HAP-1 (cell line): ENCODE measurements at regions of chr18 and their contacts with region 1.

Region 1: GRCh38 chr18:49238433-49239042 is 221.9 kb downstream of the DYM start:
- DNase-seq: peak; percentile 50 to 51
- H3K4me3 ChIP-seq: no peak overlapping the region
- H3K4me1 ChIP-seq: no peaks in the 10 kb centered on the region
- H3K27me3 ChIP-seq: no peaks in the 10 kb centered on the region

Region 2: DNA sequence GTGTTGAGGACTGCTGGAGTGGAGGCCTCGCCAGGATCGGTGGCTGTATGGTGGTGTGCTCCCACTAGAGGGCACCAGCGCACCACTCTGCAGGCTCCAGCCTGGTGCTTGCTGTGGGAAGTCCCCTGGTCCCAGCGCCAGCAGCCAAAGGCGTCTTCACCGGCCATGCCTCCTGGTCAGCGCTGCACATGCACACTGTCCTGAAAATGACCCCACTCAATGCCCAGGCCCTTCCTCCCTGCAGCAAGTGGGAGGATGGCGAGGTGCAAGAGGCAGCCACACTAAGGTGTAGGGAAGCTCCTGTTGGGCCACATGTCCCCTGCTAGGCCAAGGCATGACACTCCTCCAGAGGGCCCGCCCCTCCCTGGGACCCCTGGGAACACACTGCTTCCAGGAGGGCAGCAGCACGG is 563.2 kb before region 1 on chr18:
- in situ Hi-C with region 1: loop called (anchors 10 kb)
- DNase-seq: peak; percentile 57 to 89
- H3K4me3 ChIP-seq: no peak overlapping the region
- H3K4me1 ChIP-seq: peaks cover 3% of the 10 kb centered on the region; the same call in 1 of the 2 replicates
- H3K27me3 ChIP-seq: no peaks in the 10 kb centered on the region

Region 3: GRCh38 chr18:48777026-48777743 is 461.4 kb before region 1 on chr18:
- in situ Hi-C with region 1: loop called (anchors 25 kb)
- DNase-seq: peak; percentile 40 to 78
- H3K4me3 ChIP-seq: no peak overlapping the region
- H3K4me1 ChIP-seq: no peaks in the 10 kb centered on the region
- H3K27me3 ChIP-seq: no peaks in the 10 kb centered on the region

Region 4: DNA sequence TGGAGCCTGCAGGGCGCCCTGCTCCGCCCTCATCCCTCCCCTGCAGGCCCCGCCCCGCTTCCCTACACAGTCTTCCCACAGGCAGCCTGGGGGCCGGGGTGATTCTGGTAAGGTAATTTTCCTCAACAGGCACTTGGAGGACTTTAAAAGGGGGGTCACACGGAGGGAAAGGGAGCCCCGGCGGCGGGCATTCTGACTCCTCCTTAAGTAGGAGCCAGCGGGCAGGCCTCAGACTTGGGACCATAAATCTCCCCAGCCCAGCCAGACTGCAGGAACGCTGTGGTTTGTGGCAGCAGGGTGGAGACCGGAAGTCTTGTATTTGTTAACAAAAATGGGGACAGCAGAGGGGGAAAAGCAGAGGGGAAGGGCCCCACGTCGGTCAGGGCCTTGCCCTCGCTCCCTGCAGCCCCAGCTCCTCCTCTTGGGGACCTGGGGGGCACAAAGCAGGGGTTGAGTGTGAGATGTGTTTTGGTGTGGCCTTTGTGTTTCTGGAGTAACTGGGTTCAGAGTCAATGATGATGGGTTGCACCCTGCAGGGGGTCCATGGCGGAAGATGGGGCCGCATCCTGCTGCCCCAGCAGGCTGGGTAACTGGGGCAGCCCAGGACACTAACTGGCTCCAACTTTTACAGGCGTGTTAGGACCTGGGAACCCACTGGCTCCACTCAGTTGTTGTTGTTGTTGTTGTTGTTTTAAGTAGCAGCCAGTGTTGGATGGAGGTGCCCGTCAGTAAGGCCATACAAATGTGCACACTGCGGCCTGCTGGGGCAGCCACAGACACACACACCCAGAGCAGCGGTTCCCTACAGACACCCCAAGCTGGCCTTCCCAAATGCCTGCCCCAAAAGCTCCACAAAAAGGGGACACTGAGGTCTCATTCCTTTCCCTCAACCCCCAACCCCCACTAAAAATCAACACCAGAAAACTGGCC is 315.5 kb before region 1 on chr18:
- in situ Hi-C with region 1: no loop called
- DNase-seq: no peak
- H3K4me3 ChIP-seq: no peak overlapping the region
- H3K4me1 ChIP-seq: no peaks in the 10 kb centered on the region
- H3K27me3 ChIP-seq: no peaks in the 10 kb centered on the region